ENCODE measurements at regions of chr19 and their contacts with region 1.

Region 1: GRCh38 chr19:53849237-53849676 is 18.4 kb upstream of the MYADM start:
- DNase-seq: no peak
- H3K4me3 Mint-ChIP-seq: no peak overlapping the region
- H3K27ac Mint-ChIP-seq: no peak overlapping the region
- H3K4me1 Mint-ChIP-seq: peaks cover 20% of the 10 kb centered on the region
- H3K27me3 Mint-ChIP-seq: peaks cover 31% of the 10 kb centered on the region

Region 2: GRCh38 chr19:54023191-54023590 is 173.9 kb after region 1 on chr19:
- CTCF ChIA-PET with region 1: interaction called, 14 read pairs
- DNase-seq: no peak
- H3K4me3 Mint-ChIP-seq: no peak overlapping the region
- H3K27ac Mint-ChIP-seq: no peak overlapping the region
- H3K4me1 Mint-ChIP-seq: peaks cover 3% of the 10 kb centered on the region
- H3K27me3 Mint-ChIP-seq: peaks cover 37% of the 10 kb centered on the region

Measured in activated naive CD4-positive, alpha-beta T cell treated with anti-CD3 and anti-CD28 coated beads, Interleukin-2, amount 10 ng/mL, durations not matched to agents 7 days and 5 days (primary cell).